Common myeloid progenitor, CD34-positive (primary cell): ENCODE measurements at regions of chr2 and their contacts with region 1.

Region 1: GRCh38 chr2:69724540-69725159 is 17.3 kb upstream of the ANXA4 start:
- DNase-seq: peak; percentile 71 to 86 (median 77)
- H3K4me3 ChIP-seq: peak overlapping the region in 6 of 7 experiments; percentile 55 to 69 (median 59)
- H3K27ac ChIP-seq: no peak overlapping the region
- H3K4me1 ChIP-seq: peaks cover 0 to 8% (median 2%) of the 10 kb centered on the region in 4 experiments
- H3K27me3 ChIP-seq: no peaks in the 10 kb centered on the region

Region 2: GRCh38 chr2:69663860-69664259 is 60.8 kb before region 1 on chr2:
- CTCF ChIA-PET with region 1: no interaction called
- POLR2A ChIA-PET with region 1: no interaction called
- DNase-seq: no peak
- H3K4me3 ChIP-seq: no peak overlapping the region
- H3K27ac ChIP-seq: no peak overlapping the region
- H3K4me1 ChIP-seq: peaks cover 0 to 15% (median 7%) of the 10 kb centered on the region in 4 experiments
- H3K27me3 ChIP-seq: peaks cover 0 to 2% (median 0%) of the 10 kb centered on the region in 5 experiments

Region 3: DNA sequence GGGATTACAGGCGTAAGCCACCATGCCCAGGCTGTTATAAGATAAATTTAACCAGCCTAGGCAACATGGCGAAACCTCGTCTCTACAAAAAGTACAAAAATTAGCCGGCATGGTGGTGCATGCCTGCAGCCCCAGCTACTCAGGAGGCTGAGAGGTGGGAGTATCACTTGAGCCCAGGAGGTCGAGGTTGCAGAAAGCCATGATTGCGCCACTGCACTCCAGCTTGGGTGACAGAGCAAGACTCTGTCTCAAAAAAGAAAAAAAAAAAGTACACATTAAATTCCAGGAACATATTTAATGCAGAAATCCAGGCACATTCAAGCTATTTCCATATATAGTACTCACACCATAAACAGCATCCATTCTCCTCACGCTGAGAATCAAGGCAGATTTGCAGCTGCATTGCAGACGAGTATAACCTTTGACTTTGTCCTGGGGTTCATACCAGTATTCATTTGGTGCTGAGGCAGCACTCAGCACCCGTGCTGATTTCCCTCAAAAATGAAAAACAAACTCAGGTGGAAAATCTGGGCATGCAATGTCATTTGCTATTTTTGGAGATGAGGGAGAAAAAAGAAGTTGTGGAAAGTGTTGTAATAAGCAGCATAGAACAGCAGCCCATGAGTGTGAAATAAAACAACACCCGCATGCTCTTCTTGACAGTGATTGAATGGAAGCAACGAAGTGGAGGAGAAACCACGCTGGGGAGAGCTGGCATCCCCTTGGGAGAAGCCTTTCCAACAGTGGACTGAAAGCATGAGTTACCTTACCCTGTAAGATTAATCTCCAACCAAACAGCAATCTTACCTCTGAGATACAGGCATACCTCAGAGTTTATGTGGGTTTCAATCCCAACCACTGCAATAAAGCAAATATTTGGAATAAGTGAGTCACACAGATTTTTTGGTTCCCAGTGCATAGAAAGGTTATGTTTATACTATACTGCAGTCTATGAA is 29.5 kb before region 1 on chr2:
- CTCF ChIA-PET with region 1: no interaction called
- POLR2A ChIA-PET with region 1: no interaction called
- DNase-seq: peak in 1 of 3 donors; percentile 12
- H3K4me3 ChIP-seq: no peak overlapping the region
- H3K27ac ChIP-seq: no peak overlapping the region
- H3K4me1 ChIP-seq: peaks cover 9 to 24% (median 20%) of the 10 kb centered on the region in 4 experiments
- H3K27me3 ChIP-seq: no peaks in the 10 kb centered on the region

Region 4: DNA sequence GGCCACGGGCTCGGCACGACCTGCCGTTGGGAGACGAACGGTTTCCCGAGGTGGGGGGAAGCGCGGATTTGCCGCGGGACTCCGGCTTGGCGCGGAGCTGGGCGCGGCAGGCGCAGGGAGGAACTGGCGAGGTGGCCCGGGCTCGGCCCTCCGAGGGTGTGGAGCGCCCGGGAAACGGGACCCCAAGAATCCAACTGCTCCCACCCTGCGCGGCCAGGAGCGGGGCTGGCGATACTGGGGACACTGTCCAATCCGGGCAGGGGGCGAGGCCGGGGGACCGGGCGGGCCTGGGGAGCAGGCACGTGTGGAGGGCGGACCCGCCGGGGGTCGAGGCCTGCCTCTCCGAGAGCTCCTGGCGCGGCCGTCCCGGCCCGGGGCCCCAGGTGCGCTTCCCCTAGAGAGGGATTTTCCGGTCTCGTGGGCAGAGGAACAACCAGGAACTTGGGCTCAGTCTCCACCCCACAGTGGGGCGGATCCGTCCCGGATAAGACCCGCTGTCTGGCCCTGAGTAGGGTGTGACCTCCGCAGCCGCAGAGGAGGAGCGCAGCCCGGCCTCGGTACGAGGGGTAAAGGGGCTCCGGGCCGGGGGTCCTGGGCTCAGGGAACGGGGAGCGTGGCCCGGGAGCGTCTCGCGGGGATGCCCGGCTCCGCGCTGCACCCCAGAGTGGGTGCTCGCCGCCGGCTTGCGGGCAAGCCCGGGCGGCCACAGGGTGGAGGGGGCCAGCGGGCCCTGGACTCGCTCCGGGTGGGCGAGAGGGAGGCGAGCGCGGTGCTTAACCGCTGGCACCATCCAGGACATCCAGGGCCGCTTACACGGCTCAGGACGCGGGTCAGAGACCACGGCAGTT is 17.2 kb after region 1 on chr2 and contains the start of gene ANXA4:
- CTCF ChIA-PET with region 1: interaction called, 32 read pairs
- POLR2A ChIA-PET with region 1: interaction called, 4 read pairs
- DNase-seq: peak; percentile 42 to 59 (median 53)
- H3K4me3 ChIP-seq: peak within 1 kb of the TSS; percentile 71 to 95 (median 76)
- H3K27ac ChIP-seq: peak within 1 kb of the TSS; percentile 54 to 71
- H3K4me1 ChIP-seq: peaks cover 2 to 26% (median 17%) of the 10 kb centered on the region in 4 experiments
- H3K27me3 ChIP-seq: no peaks in the 10 kb centered on the region

Region 5: DNA sequence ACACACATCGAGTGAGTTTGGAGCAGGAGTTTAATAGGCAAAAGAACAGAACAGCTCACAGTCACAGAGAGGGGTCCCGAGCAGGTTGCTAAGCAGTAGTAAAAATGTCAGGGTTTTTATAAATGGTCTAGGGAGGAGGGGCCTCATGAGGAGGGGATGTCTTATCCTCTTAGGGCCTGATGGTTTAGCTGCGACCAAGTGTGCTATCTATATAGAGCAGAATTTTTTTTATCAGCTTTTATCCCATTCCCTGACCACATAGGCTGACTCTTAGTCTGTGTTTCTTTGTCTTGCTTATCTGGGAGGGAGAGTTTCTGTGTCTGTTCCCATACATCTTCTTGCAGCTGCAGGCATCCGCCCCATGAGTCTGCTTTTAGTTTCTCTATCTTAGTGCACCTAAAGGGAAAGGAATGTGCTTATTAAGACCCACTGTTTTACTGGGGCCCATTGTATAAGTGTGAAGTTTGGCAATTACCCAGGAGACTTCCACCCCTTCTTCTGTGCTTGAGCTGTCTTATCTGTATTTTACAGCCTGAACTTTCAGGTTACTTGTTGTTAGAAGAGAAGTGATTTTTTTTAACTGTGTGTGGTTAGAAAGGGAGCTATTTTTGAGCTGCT is 74.4 kb after region 1 on chr2:
- CTCF ChIA-PET with region 1: interaction called, 13 read pairs
- POLR2A ChIA-PET with region 1: no interaction called
- DNase-seq: peak; percentile 86 to 97 (median 93)
- H3K4me3 ChIP-seq: peak overlapping the region; percentile 7 to 85 (median 66)
- H3K27ac ChIP-seq: peak overlapping the region; percentile 75 to 82
- H3K4me1 ChIP-seq: peaks cover 18 to 84% (median 40%) of the 10 kb centered on the region in 4 experiments
- H3K27me3 ChIP-seq: no peaks in the 10 kb centered on the region

Region 6: GRCh38 chr2:69804416-69804815 is 79.8 kb after region 1 on chr2:
- CTCF ChIA-PET with region 1: interaction called, 13 read pairs
- POLR2A ChIA-PET with region 1: no interaction called
- DNase-seq: peak in 2 of 3 donors; percentile 29 to 49
- H3K4me3 ChIP-seq: peak overlapping the region in 3 of 7 experiments; percentile 3 to 56 (median 28)
- H3K27ac ChIP-seq: no peak overlapping the region
- H3K4me1 ChIP-seq: peaks cover 10 to 47% (median 21%) of the 10 kb centered on the region in 4 experiments
- H3K27me3 ChIP-seq: no peaks in the 10 kb centered on the region

Region 7: DNA sequence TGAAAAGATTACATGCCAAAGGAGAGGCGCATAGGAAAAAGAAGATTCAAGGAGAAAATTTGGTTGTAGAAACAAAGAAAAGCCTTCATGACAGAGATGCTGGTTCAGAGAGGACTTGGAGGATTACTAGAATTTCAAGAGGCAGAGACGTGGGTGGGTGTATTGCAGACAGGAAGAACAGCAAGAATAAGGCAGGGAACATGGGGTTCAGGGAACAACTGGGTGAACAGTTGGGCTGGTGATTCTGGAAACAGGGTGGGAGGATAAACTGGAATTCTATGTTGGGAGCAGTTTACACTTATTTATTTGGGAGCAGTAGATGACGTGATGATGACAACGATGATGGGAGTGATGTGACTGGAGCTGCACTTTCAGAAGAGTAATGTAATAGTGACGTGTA is 86.4 kb after region 1 on chr2:
- CTCF ChIA-PET with region 1: interaction called, 164 read pairs
- POLR2A ChIA-PET with region 1: no interaction called
- DNase-seq: no peak
- H3K4me3 ChIP-seq: no peak overlapping the region
- H3K27ac ChIP-seq: no peak overlapping the region
- H3K4me1 ChIP-seq: peaks cover 0 to 3% (median 0%) of the 10 kb centered on the region in 4 experiments
- H3K27me3 ChIP-seq: no peaks in the 10 kb centered on the region